ENCODE measurements at regions of chr20 and their contacts with region 1.

Region 1: DNA sequence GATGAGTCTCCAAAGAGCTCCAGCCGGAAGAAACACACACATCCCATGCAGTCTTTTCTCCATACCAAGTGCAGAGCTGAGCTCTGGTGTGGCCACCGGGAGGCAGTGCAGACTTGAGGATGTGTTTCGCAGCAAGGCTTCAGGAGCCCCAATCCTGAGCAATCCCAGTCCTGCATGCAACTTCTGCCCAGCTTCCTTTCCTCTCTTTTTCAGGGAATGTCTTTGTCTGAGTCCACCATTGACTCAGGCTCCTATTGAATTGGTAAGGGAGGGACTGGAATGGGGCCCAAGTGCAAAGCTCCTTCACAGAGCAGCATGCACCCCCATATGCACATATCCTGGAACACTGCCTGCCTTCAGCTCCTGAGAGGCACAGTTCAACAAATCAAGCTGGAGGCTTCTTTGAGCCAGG is 50.5 kb upstream of the ASIP start:
- DNase-seq: peak; percentile 84
- H3K4me3 ChIP-seq: peak overlapping the region in 1 of 2 experiments; percentile 9; a peak in 1 of 4 replicates
- H3K27ac ChIP-seq: no peak overlapping the region
- H3K4me1 ChIP-seq: peaks cover 0 to 20% of the 10 kb centered on the region in 2 experiments; a peak in 2 of 4 replicates
- H3K27me3 ChIP-seq: peaks cover 9% of the 10 kb centered on the region; the same call in 1 of the 2 replicates
- CTCF ChIP-seq: peak; percentile 85
- EP300 ChIP-seq: no peak
- RAD21 ChIP-seq: peak; percentile 96

Region 2: GRCh38 chr20:33947709-33948295 is 242.9 kb before region 1 on chr20:
- CTCF ChIA-PET with region 1: no interaction called
- POLR2A ChIA-PET with region 1: no interaction called
- DNase-seq: peak; percentile 53
- H3K4me3 ChIP-seq: no peak overlapping the region
- H3K27ac ChIP-seq: no peak overlapping the region
- H3K4me1 ChIP-seq: no peaks in the 10 kb centered on the region
- H3K27me3 ChIP-seq: no peaks in the 10 kb centered on the region
- CTCF ChIP-seq: peak; percentile 59
- EP300 ChIP-seq: no peak
- RAD21 ChIP-seq: peak; percentile 53

Region 3: GRCh38 chr20:34171640-34172039 is 19.0 kb before region 1 on chr20:
- CTCF ChIA-PET with region 1: interaction called, 22 read pairs
- POLR2A ChIA-PET with region 1: no interaction called
- DNase-seq: peak; percentile 83
- H3K4me3 ChIP-seq: no peak overlapping the region
- H3K27ac ChIP-seq: peak overlapping the region in 1 of 2 experiments; percentile 12; a peak in 2 of 4 replicates
- H3K4me1 ChIP-seq: no peaks in the 10 kb centered on the region; a peak in 1 of 4 replicates
- H3K27me3 ChIP-seq: no peaks in the 10 kb centered on the region
- CTCF ChIP-seq: no peak
- EP300 ChIP-seq: peak in 1 of 2 experiments; percentile 83; a peak in 2 of 4 replicates
- RAD21 ChIP-seq: no peak

Region 4: DNA sequence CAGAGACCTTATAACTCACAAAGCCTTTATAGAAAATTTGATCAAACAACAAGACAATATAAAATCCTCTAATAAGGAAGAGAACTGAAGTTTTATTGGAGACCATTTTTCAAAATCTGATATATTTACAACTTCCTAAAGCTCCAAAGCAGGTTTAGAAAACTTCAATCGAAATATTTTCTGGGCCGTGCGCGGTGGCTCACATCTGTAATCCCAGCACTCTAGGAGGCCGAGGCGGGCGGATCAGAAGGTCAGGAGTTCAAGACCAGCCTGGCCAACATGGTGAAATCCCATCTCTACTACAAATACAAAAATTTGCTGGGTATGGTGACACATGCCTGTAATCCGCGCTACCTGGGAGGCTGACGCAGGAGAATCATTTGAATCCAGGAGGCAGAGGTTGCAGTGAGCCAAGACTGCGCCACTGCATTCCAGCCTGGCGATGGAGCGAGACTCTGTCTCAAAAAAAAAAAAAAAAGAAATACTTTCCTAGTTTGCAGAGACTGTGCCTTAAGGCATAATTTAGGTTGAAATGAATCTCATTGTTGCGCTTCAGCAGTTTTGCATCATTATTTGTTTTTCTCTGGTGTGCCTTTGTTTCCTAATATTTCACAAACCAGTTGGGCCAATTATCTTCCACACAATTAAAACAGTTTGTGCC is 10.1 kb before region 1 on chr20:
- CTCF ChIA-PET with region 1: interaction called, 22 read pairs
- POLR2A ChIA-PET with region 1: no interaction called
- DNase-seq: no peak
- H3K4me3 ChIP-seq: no peak overlapping the region
- H3K27ac ChIP-seq: no peak overlapping the region
- H3K4me1 ChIP-seq: no peaks in the 10 kb centered on the region
- H3K27me3 ChIP-seq: peaks cover 14% of the 10 kb centered on the region
- CTCF ChIP-seq: no peak
- EP300 ChIP-seq: no peak
- RAD21 ChIP-seq: no peak

Region 5: GRCh38 chr20:34210271-34210670 is 19.6 kb after region 1 on chr20:
- CTCF ChIA-PET with region 1: interaction called, 12 read pairs
- POLR2A ChIA-PET with region 1: no interaction called
- DNase-seq: no peak
- H3K4me3 ChIP-seq: no peak overlapping the region
- H3K27ac ChIP-seq: no peak overlapping the region
- H3K4me1 ChIP-seq: no peaks in the 10 kb centered on the region
- H3K27me3 ChIP-seq: no peaks in the 10 kb centered on the region
- CTCF ChIP-seq: no peak
- EP300 ChIP-seq: no peak
- RAD21 ChIP-seq: no peak

Region 6: GRCh38 chr20:34215711-34216381 is 25.2 kb after region 1 on chr20:
- CTCF ChIA-PET with region 1: interaction called, 10 read pairs
- POLR2A ChIA-PET with region 1: interaction called, 3 read pairs
- DNase-seq: peak; percentile 84
- H3K4me3 ChIP-seq: peak overlapping the region; percentile 54 to 60
- H3K27ac ChIP-seq: peak overlapping the region; percentile 6 to 65
- H3K4me1 ChIP-seq: peaks cover 0 to 3% of the 10 kb centered on the region in 2 experiments; a peak in 3 of 4 replicates
- H3K27me3 ChIP-seq: no peaks in the 10 kb centered on the region
- CTCF ChIP-seq: no peak
- EP300 ChIP-seq: no peak
- RAD21 ChIP-seq: no peak

Region 7: DNA sequence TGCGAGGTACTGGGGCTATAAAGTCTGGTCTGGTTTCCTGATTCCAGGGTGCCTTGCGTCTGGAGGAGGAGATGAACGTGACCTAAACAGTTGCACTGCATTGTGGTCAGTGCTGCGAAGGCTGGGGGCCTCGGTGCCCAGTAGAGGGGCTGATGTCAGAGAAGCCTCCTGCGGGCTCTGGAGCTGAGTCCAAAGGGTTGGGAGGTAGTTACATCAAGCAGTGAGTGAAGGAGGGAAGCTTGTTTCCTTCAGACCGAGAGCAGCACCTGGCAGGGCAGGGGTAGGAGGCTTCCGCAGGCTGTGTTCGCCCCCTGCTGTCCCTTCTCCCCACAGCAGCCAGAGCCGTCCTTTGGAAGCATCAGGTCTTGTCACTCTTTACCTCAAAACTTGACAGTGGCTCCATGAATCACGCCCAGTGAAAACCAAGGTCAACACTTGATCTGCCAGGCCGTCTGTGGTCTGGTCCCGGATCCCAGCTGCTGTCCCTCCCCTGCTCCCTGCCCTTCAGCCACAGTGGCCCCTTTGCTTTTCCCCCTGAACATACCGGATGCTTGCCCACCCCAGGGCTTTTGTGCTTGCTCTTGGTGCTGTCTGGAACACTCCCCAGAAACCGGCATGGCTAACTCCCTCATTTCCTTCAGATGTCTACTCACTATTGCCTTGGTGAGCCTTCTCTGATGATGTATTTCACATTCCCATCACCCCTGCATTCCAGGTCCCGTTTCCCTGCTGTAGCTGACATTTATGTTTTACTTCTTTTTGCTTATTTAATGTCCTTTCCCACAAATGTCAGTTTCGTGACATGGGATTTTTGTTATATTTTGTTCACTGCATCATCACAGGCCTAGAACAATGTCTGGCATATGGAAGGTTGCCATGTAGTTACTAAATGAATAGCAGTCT is 332.5 kb after region 1 on chr20:
- CTCF ChIA-PET with region 1: interaction called, 13 read pairs
- POLR2A ChIA-PET with region 1: no interaction called
- DNase-seq: peak; percentile 69
- H3K4me3 ChIP-seq: peak overlapping the region in 1 of 2 experiments; percentile 15; a peak in 2 of 4 replicates
- H3K27ac ChIP-seq: peak overlapping the region in 1 of 2 experiments; percentile 36; a peak in 1 of 4 replicates
- H3K4me1 ChIP-seq: peaks cover 15 to 17% of the 10 kb centered on the region in 2 experiments; a peak in 3 of 4 replicates
- H3K27me3 ChIP-seq: no peaks in the 10 kb centered on the region
- CTCF ChIP-seq: peak; percentile 63
- EP300 ChIP-seq: no peak
- RAD21 ChIP-seq: peak; percentile 71

Measured in SK-N-SH (cell line).